Esophagus muscularis mucosa (tissue), 4 donors: ENCODE measurements at regions of chr2 and their contacts with region 1.

Region 1: GRCh38 chr2:71000780-71001591 is 6.3 kb upstream of the TEX261 start:
- DNase-seq: no peak
- H3K4me3 ChIP-seq: peak overlapping the region; percentile 28 to 37 (median 30)
- H3K27ac ChIP-seq: no peak overlapping the region
- H3K4me1 ChIP-seq: peaks cover 3 to 10% (median 10%) of the 10 kb centered on the region in 4 donors
- H3K27me3 ChIP-seq: peaks cover 0 to 10% (median 0%) of the 10 kb centered on the region in 4 donors
- CTCF ChIP-seq: peak; percentile 84 to 97 (median 88)
- EP300 ChIP-seq: no peak
- POLR2A ChIP-seq: no peak

Region 2: GRCh38 chr2:70964596-70965386 is 36.2 kb before region 1 on chr2:
- intact Hi-C with region 1: loop called (anchors 2 kb)
- DNase-seq: peak; percentile 93
- H3K4me3 ChIP-seq: peak overlapping the region; percentile 54 to 64 (median 57)
- H3K27ac ChIP-seq: no peak overlapping the region
- H3K4me1 ChIP-seq: peaks cover 6 to 13% (median 10%) of the 10 kb centered on the region in 4 donors
- H3K27me3 ChIP-seq: peaks cover 0 to 58% (median 3%) of the 10 kb centered on the region in 4 donors
- CTCF ChIP-seq: peak; percentile 70 to 84 (median 75)
- EP300 ChIP-seq: no peak
- POLR2A ChIP-seq: no peak